Activated CD4-positive, alpha-beta T cell treated with anti-CD3 and anti-CD28 coated beads for 36 hours (primary cell): ENCODE measurements at regions of chr6 and their contacts with region 1.

Region 1: GRCh38 chr6:41920921-41921711 is at the starts of genes BYSL and MED20:
- DNase-seq: peak; percentile 96
- ATAC-seq: peak; percentile 83
- H3K4me3 Mint-ChIP-seq: peak within 1 kb of the TSS; percentile 99
- H3K27ac Mint-ChIP-seq: peak within 1 kb of the TSS; percentile 98
- H3K4me1 Mint-ChIP-seq: peaks cover 49% of the 10 kb centered on the region
- H3K27me3 Mint-ChIP-seq: no peaks in the 10 kb centered on the region
- total RNA-seq, gene BYSL: 51.6 to 56.0 TPM
- total RNA-seq, gene MED20: 19.4 to 21.6 TPM

Region 2: DNA sequence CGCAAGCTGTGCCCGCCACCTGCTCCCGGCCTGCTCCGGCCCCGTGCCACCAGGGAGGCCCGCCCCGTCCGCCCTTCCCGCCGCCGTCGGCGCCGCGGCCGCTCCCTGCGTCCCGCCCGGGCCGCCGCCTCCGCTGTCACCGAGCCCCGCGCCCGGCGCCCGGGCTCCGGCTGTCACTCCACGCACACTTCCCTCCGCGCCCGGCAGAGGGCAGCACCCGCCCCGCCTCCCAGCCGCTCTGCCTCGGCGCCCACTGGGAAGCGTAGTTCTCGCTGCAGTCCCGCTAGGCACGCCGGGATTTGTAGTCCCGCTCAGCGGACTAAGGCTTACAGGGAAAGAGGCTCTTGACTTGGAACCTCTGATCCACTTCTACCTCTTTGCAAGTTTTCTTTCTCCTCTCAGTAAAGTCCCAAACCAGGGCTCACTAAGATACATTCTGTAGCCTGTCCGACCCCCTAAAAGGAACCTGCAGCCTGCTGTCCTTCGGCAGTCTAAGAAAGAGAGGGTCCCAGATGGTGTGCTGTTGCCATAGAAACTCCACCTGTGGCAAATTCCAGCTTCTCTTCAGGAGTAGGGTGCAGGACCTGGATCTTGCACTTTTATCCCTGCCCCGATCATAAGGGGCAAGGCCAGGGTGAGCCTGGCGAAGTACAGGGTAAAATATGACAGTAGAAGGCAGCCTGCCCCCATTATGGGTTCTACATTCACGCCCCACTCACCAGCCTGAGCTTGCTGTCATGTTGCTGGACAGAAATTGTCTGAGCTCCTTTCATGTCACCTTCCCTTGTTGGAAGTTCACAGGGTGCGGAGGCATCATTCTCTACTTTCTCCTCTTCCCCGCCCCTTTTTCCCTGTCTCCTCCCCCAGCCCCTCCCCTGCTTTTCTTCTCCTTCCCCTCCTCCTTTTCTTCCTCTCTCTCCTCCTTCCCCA is 185.4 kb before region 1 on chr6 and contains the start of gene TFEB:
- CTCF ChIA-PET with region 1: no interaction called
- POLR2A ChIA-PET with region 1: no interaction called
- intact Hi-C with region 1: loop called in 1 of 2 experiments (anchors 1 kb)
- DNase-seq: peak; percentile 97
- ATAC-seq: peak; percentile 76
- H3K4me3 Mint-ChIP-seq: peak within 1 kb of the TSS; percentile 74
- H3K27ac Mint-ChIP-seq: peak within 1 kb of the TSS; percentile 42
- H3K4me1 Mint-ChIP-seq: peaks cover 29% of the 10 kb centered on the region
- H3K27me3 Mint-ChIP-seq: no peaks in the 10 kb centered on the region
- total RNA-seq, gene TFEB: 8.5 to 9.2 TPM

Region 3: GRCh38 chr6:41846666-41847237 is 74.4 kb before region 1 on chr6:
- CTCF ChIA-PET with region 1: interaction called, 3 read pairs
- POLR2A ChIA-PET with region 1: no interaction called
- intact Hi-C with region 1: loop called (anchors 5 kb)
- DNase-seq: peak; percentile 67
- ATAC-seq: peak; percentile 85
- H3K4me3 Mint-ChIP-seq: no peak overlapping the region
- H3K27ac Mint-ChIP-seq: no peak overlapping the region
- H3K4me1 Mint-ChIP-seq: peaks cover 5% of the 10 kb centered on the region
- H3K27me3 Mint-ChIP-seq: no peaks in the 10 kb centered on the region

Region 4: DNA sequence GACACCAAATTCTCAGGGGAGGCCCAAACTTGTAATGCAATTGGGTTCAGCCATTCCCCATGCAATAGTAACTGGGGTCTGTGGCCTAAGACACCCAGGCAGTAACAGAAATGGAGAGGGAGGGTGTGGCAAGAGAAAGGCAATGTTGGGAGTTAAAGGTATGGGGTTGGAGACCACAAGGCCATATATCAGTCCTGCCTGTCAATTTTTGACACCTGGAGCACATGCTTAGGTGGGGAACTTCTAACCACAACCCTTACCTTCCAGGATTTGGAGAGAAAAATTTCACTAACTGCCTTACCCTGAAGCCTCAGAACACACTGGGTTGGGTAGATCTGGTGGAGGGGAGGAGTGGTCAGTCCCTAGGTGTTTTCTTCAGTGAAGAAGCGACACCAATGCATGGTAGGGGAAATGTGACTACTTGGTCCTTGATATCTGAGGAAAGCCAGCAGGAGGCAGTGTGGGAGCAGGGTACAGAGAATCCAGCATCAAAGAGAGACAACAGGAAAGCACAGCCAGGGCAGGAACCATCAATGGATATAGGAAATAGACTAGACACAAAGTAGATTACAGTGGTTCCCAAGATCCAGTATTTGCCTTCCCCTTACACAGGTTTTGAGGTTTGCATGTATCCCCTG is 19.1 kb before region 1 on chr6:
- CTCF ChIA-PET with region 1: interaction called, 23 read pairs
- POLR2A ChIA-PET with region 1: no interaction called
- intact Hi-C with region 1: loop called in 1 of 2 experiments (anchors 2 kb)
- DNase-seq: peak; percentile 75
- ATAC-seq: peak; percentile 78
- H3K4me3 Mint-ChIP-seq: no peak overlapping the region
- H3K27ac Mint-ChIP-seq: no peak overlapping the region
- H3K4me1 Mint-ChIP-seq: peaks cover 6% of the 10 kb centered on the region
- H3K27me3 Mint-ChIP-seq: no peaks in the 10 kb centered on the region

Region 5: GRCh38 chr6:41941280-41942066 is 20.4 kb after region 1 on chr6 and contains the start of gene CCND3:
- CTCF ChIA-PET with region 1: interaction called, 66 read pairs
- POLR2A ChIA-PET with region 1: interaction called, 3 read pairs
- intact Hi-C with region 1: loop called (anchors 1 kb)
- DNase-seq: peak; percentile 96
- ATAC-seq: peak; percentile 79
- H3K4me3 Mint-ChIP-seq: peak within 1 kb of the TSS; percentile 100
- H3K27ac Mint-ChIP-seq: peak within 1 kb of the TSS; percentile 96
- H3K4me1 Mint-ChIP-seq: peaks cover 63% of the 10 kb centered on the region
- H3K27me3 Mint-ChIP-seq: no peaks in the 10 kb centered on the region
- total RNA-seq, gene CCND3: 625 to 806 TPM

Region 6: DNA sequence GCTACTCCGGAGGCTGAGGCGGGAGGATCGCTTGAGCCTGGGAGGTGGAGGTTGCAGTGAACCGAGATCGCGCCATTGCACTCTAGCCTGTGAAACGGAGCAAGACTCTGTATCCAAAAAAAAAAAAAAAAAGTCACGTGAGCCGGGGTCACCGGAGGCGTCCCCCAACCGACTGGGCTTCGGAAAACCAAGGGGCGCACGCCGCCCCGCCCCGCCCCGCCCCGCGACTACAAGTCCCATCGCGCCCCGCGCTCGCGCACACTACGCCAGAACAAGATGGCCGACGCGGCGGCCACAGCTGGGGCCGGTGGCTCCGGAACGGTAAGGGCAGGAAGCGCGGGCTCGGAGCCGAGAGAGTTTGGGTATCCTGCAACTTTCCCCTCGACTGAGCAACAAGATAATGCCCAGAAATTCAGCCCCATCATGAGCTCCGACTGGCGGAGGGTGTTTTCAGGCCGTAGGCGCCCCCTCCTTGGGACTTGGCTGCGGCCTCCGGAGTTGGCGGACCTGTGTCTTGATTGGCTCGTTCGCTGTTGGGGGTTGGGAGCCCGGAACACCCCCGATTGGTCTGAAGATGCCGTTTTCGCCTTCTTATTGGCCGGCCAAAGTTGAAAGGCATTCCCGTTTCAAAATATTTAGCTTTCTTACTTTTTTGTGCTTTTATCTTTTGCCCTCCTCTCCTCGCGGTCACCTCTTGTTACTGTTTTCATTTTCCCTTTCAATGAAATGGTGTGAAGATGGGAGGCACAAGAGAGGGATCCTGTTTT is 129.3 kb after region 1 on chr6 and contains the start of gene TAF8:
- CTCF ChIA-PET with region 1: interaction called, 189 read pairs
- POLR2A ChIA-PET with region 1: interaction called, 9 read pairs
- intact Hi-C with region 1: loop called (anchors 1 kb)
- DNase-seq: peak; percentile 94
- ATAC-seq: peak; percentile 76
- H3K4me3 Mint-ChIP-seq: peak within 1 kb of the TSS; percentile 88
- H3K27ac Mint-ChIP-seq: peak within 1 kb of the TSS; percentile 96
- H3K4me1 Mint-ChIP-seq: peaks cover 64% of the 10 kb centered on the region
- H3K27me3 Mint-ChIP-seq: no peaks in the 10 kb centered on the region
- total RNA-seq, gene TAF8: 52.3 to 53.1 TPM

Region 7: DNA sequence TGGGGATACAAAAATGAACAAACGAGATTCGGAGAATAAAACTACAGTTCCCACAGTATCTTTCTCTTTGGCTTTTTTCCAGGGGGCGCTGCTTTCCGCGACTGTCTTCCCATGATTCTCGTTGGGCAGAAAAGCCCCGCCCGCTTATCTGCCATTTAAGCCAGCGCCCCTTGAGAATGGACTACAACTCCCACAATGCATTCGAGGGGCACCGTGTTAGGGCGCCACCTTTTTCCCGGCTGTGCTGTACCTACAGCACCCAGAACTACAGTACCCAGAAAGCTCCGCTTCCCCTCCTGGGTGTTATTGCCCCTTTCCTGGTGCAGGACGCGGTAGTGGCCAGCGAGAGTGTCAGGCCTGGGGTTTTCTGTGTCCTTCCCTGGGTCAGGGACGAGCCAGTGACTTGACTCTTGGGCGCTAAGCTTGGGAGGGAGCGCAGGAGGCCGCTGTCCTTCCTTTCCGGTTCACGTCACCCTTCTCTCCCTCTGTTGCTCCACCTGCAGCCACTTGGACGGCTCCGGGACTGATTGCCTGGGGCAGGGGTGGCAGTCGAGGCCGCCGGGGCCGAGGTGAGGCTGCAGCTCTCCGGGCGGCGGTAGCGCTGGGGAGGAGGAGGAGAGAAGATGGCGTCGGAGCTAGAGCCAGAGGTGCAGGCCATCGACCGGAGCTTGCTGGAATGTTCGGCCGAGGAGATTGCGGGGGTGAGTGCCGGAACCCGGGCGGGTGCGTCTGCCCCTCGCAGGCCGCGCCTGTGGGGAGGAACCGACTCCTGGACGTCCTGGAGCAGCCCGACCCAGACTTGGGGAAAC is 642.8 kb after region 1 on chr6 and contains the start of gene UBR2:
- CTCF ChIA-PET with region 1: interaction called, 3 read pairs
- POLR2A ChIA-PET with region 1: no interaction called
- intact Hi-C with region 1: loop called in 1 of 2 experiments (anchors 2 kb)
- DNase-seq: peak; percentile 97
- ATAC-seq: peak; percentile 97
- H3K4me3 Mint-ChIP-seq: peak within 1 kb of the TSS; percentile 97
- H3K27ac Mint-ChIP-seq: peak within 1 kb of the TSS; percentile 95
- H3K4me1 Mint-ChIP-seq: peaks cover 31% of the 10 kb centered on the region
- H3K27me3 Mint-ChIP-seq: no peaks in the 10 kb centered on the region
- total RNA-seq, gene UBR2: 23.9 to 28.1 TPM